Activated CD4-positive, alpha-beta memory T cell treated with anti-CD3 and anti-CD28 coated beads for 36 hours (primary cell): ENCODE measurements at regions of chr21 and their contacts with region 1.

Region 1: GRCh38 chr21:42414928-42415769 is 11.4 kb downstream of the UBASH3A start:
- DNase-seq: peak; percentile 98
- H3K4me3 Mint-ChIP-seq: peak overlapping the region; percentile 67
- H3K27ac Mint-ChIP-seq: peak overlapping the region; percentile 96
- H3K4me1 Mint-ChIP-seq: peaks cover 45% of the 10 kb centered on the region
- H3K27me3 Mint-ChIP-seq: no peaks in the 10 kb centered on the region

Region 2: GRCh38 chr21:42315296-42315891 is 99.8 kb before region 1 on chr21 and contains the start of gene TFF3:
- CTCF ChIA-PET with region 1: no interaction called
- POLR2A ChIA-PET with region 1: no interaction called
- intact Hi-C with region 1: no loop called
- DNase-seq: no peak
- H3K4me3 Mint-ChIP-seq: no peak within 1 kb of the TSS
- H3K27ac Mint-ChIP-seq: no peak within 1 kb of the TSS
- H3K4me1 Mint-ChIP-seq: peaks cover 5% of the 10 kb centered on the region
- H3K27me3 Mint-ChIP-seq: no peaks in the 10 kb centered on the region
- total RNA-seq, gene TFF3: not detected

Region 3: DNA sequence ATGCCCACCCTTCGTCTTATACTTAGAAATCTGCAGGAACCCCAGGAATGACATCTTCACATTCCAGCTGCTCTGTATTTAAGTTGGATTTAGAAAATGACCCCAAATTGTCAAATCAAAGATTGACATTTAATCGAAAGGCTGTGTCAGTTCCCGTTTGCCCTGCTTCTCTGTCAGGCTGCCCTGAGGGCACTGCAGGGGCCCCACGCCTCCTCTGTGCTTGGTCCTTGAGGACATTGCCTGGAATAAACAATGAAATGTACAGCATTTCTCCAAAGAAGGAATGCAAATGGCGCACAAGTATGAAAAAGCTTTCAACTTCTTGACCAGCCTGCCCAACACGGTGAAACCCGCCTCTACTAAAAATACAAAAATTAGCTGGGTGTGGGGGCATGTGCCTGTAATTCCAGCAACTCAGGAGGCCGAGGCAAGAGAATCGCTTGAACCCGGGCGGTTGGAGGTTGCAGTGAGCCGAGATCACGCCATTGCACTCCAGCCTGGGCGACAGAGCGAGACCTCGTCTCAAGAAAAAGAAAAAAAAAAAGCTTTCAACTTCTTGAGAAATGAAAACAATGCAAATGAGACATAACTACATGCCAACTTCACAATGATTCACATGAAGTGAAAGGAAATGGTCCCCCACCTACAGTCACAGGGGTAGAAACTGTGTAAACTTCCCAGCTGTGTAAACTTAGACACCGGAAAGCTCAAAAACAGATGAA is 22.3 kb before region 1 on chr21:
- CTCF ChIA-PET with region 1: interaction called, 4 read pairs
- POLR2A ChIA-PET with region 1: interaction called, 6 read pairs
- intact Hi-C with region 1: loop called (anchors 1 kb)
- DNase-seq: peak; percentile 45
- H3K4me3 Mint-ChIP-seq: peak overlapping the region; percentile 64
- H3K27ac Mint-ChIP-seq: peak overlapping the region; percentile 84
- H3K4me1 Mint-ChIP-seq: peaks cover 52% of the 10 kb centered on the region
- H3K27me3 Mint-ChIP-seq: no peaks in the 10 kb centered on the region

Region 4: DNA sequence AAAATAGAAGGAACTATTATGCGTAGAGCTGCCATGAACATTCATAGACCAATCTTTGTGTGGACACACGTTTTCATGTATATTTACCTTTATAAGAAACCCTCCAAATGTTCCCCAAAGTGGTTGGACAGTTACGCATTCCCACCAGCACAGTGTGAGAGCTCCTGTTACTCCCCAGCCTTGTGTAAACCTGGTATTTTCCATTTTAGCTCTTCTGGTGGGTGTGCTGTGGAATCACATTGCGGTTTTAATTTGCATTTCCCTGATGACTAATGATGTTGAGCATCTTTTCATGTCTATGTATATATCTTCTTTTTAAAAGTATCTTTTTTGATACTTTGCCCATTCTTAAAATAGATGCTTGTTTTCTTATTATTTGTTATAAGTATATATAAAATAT is 14.6 kb before region 1 on chr21:
- CTCF ChIA-PET with region 1: interaction called, 8 read pairs
- POLR2A ChIA-PET with region 1: interaction called, 79 read pairs
- intact Hi-C with region 1: loop called (anchors 2 kb)
- DNase-seq: peak; percentile 55
- H3K4me3 Mint-ChIP-seq: peak overlapping the region; percentile 49
- H3K27ac Mint-ChIP-seq: peak overlapping the region; percentile 77
- H3K4me1 Mint-ChIP-seq: peaks cover 50% of the 10 kb centered on the region
- H3K27me3 Mint-ChIP-seq: no peaks in the 10 kb centered on the region

Region 5: DNA sequence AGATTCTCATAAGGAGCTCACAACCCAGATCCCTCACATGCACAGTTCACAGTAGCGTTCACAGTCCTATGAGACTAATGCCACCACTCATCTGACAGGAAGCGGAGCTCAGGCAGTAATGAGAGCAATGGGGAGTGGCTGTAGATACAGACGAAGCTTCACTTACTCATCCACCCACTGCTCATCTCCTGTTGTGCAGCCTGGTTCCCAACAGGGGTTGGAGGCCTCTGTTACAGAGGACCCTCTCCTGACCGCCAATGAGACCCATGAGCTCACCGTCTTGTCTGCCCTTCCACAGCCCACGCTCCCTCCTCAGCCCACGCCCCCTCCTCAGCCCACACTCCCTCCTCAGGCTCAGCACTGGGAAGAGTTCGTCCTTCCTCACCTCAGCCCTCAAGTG is 41.3 kb after region 1 on chr21:
- CTCF ChIA-PET with region 1: no interaction called
- POLR2A ChIA-PET with region 1: no interaction called
- intact Hi-C with region 1: loop called (anchors 5 kb)
- DNase-seq: peak; percentile 77
- H3K4me3 Mint-ChIP-seq: no peak overlapping the region
- H3K27ac Mint-ChIP-seq: peak overlapping the region; percentile 81
- H3K4me1 Mint-ChIP-seq: peaks cover 36% of the 10 kb centered on the region
- H3K27me3 Mint-ChIP-seq: no peaks in the 10 kb centered on the region